Activated T-helper 1 cell treated with anti-CD3 and anti-CD28 coated beads, Interleukin-12 subunit alpha, Interleukin-12 subunit beta, Interleukin-2, Interleukin-4 antibody, amounts not matched to agents 30 ng/mL and 10 ng/mL and 1 ng/mL, durations not matched to agents 14 hours and 24 hours and 36 hours (primary cell): ENCODE measurements at regions of chr11 and their contacts with region 1.

Region 1: DNA sequence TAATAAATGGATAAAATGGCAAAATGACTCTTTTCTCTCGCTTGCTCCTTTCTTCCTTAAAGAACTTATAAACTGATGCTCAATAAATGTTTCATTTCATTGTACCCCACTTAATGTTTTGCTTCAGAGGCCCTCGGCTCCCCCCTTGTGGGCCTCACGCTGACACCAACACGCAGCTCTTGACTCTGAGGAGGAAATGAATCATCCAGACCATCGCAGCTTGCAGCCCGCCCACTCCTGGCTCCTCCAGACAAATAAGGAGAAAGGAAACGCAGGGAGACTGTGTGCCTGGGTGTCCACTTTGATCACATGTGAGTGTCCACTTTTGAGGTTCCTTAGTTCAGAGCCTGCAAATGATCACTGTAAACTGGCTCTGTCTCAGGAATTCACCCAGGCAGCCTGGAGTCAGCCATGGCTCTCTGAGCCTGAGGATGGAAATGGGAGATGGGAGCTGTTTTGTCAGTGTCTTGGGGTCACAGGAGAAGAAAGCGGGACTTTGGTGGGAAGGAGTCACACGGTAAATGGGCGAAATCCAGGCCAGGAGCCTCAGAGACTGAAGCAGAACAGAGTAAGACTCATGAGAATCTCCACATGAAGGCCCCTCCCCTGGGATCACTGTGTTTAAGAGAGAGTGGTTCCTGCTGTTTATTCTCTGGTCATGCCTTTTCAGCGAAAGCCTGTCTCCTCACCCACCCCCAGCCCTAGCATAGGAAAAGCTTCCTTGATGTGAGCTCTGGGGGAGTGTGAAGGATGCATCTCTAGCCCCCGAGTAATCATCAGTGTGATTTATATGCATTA is 96.5 kb downstream of the CWC15 start:
- DNase-seq: peak; percentile 38
- H3K4me3 Mint-ChIP-seq: peak overlapping the region; percentile 45
- H3K27ac Mint-ChIP-seq: peak overlapping the region; percentile 78
- H3K4me1 Mint-ChIP-seq: peaks cover 32% of the 10 kb centered on the region
- H3K27me3 Mint-ChIP-seq: no peaks in the 10 kb centered on the region

Region 2: GRCh38 chr11:93197380-93198214 is 1679.2 kb before region 1 on chr11 and contains the start of gene SLC36A4:
- intact Hi-C with region 1: loop called (anchors 10 kb)
- DNase-seq: peak; percentile 80
- H3K4me3 Mint-ChIP-seq: peak within 1 kb of the TSS; percentile 97
- H3K27ac Mint-ChIP-seq: peak within 1 kb of the TSS; percentile 97
- H3K4me1 Mint-ChIP-seq: peaks cover 13% of the 10 kb centered on the region
- H3K27me3 Mint-ChIP-seq: peaks cover 13% of the 10 kb centered on the region
- total RNA-seq, gene SLC36A4: 16.9 and 17.1 TPM in 2 replicates

Region 3: GRCh38 chr11:94519478-94520084 is 357.3 kb before region 1 on chr11:
- intact Hi-C with region 1: loop called (anchors 5 kb)
- DNase-seq: no peak
- H3K4me3 Mint-ChIP-seq: no peak overlapping the region
- H3K27ac Mint-ChIP-seq: no peak overlapping the region
- H3K4me1 Mint-ChIP-seq: no peaks in the 10 kb centered on the region
- H3K27me3 Mint-ChIP-seq: peaks cover 27% of the 10 kb centered on the region

Region 4: DNA sequence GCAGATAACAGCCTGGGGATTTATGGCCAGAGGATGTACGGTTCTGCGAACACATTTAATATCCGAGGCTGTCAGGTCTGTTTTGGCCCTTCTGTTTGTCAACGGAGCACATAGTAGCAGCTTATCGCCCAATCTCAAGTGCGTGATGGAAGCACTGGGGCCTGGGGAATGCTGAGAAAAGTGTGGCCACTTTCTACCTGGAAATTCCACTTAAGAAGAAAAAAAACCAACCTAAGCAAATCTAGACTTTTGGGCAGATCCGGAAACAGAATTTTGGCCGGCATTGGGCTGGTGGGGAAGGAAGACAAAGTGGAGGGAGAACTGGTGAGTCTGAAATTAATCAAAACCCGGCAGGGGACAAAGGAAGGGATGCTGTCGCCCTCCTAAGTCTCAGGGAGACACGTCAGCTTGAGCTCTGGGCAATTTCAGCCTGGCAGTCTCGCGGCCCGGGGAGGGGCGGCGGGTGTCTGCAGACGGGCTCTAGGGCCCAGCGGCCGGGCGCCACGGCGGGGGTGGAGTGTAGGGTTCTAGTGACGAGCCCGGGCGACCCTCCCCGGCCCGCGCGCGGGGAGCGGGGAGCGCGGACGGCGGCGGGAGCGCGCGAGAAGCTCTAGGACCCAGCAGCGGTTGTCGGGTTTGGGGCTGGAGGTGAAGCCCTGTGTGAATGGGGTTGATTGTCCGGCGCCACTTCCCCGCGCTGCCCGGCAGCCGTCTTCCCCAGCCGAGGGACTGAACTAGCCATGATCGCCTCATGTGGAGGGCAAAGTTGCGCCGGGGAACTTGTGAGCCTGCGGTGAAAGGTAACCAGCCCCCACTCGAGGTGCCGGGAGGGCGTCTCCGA is 108.9 kb before region 1 on chr11 and contains the start of gene AMOTL1:
- intact Hi-C with region 1: loop called (anchors 1 kb)
- DNase-seq: peak; percentile 32
- H3K4me3 Mint-ChIP-seq: peak within 1 kb of the TSS; percentile 78
- H3K27ac Mint-ChIP-seq: peak within 1 kb of the TSS; percentile 64
- H3K4me1 Mint-ChIP-seq: peaks cover 13% of the 10 kb centered on the region
- H3K27me3 Mint-ChIP-seq: peaks cover 38% of the 10 kb centered on the region
- total RNA-seq, gene AMOTL1: 4.4 and 4.9 TPM in 2 replicates

Region 5: DNA sequence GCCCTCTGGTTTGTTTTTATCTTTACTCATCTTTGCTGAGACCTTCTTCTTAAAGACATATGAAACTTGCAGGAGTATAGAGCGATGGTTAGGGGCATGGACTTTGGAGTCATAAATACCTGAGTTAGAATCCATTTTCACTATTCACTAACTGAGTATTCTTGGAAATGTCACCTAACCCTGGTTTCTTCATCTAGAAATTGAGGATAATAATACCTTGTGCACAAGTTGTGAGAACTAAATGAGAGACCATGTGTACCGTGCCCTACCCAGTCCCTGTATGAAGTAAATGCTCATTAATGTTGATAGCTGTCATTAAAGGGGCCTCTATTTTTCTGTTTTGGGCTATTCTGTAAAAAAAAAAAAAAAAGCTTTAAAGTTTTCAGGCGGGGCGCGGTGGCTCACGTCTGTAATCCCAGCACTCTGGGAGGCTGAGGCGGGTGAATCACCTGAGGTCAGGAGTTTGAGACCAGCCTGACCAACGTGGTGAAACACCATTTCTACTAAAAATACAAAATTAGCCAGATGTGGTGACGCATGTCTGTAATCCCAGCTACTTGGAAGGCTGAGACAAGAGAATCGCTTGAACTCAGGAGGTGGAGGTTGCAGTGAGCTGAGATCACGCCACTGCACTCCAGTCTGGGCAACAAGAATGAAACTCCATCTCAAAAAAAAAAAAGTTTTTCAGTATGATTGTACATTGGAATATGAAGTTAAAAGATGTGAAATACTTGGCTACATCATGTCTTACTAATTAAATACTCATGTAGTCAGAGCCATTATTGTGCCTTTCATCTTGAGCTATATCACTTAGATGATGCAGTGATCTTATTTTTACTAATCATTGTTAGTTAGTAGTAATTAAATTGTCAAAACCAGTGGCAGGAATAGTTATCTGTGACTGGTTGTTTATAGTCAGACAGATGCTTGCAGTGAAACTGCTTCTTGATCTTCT is 13.6 kb before region 1 on chr11:
- intact Hi-C with region 1: no loop called
- DNase-seq: no peak
- H3K4me3 Mint-ChIP-seq: no peak overlapping the region
- H3K27ac Mint-ChIP-seq: no peak overlapping the region
- H3K4me1 Mint-ChIP-seq: no peaks in the 10 kb centered on the region
- H3K27me3 Mint-ChIP-seq: peaks cover 2% of the 10 kb centered on the region

Region 6: DNA sequence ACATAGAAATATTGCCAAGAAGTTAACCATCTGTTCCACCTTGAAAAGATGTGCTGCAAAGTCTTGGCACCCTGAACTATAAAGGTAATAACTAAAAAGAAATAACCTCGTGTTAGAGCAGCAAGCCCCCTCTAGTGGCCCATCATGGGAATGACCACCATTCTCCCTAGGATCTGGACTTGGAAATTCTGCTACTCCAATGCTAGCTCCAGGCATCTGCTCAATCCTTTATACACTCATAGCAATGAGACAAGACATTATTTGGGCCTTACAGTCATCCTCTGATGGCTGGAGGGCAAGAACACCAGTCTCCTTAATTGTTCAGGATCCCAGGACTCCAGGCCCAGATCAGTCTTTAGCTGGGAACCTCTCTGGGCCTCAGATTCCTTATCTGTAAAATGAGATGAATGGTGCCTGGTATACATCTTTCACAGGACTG is 20.5 kb after region 1 on chr11:
- intact Hi-C with region 1: loop called (anchors 2 kb)
- DNase-seq: no peak
- H3K4me3 Mint-ChIP-seq: no peak overlapping the region
- H3K27ac Mint-ChIP-seq: no peak overlapping the region
- H3K4me1 Mint-ChIP-seq: no peaks in the 10 kb centered on the region
- H3K27me3 Mint-ChIP-seq: peaks cover 3% of the 10 kb centered on the region